ENCODE measurements at regions of chr5 and their contacts with region 1.

Region 1: GRCh38 chr5:151126199-151126645 is 31.4 kb downstream of the ANXA6 start:
- DNase-seq: peak; percentile 66
- ATAC-seq: peak; percentile 65
- H3K4me3 ChIP-seq: no peak overlapping the region
- H3K27ac ChIP-seq: peak overlapping the region; percentile 75
- H3K4me1 ChIP-seq: peaks cover 65% of the 10 kb centered on the region
- H3K27me3 ChIP-seq: no peaks in the 10 kb centered on the region
- CTCF ChIP-seq: peak; percentile 84 to 92 (median 87)
- EP300 ChIP-seq: no peak
- POLR2A ChIP-seq: peak; percentile 50; the same call in 1 of the 2 replicates
- RAD21 ChIP-seq: peak; percentile 93

Region 2: GRCh38 chr5:151030400-151030799 is 95.8 kb before region 1 on chr5:
- CTCF ChIA-PET with region 1: no interaction called
- POLR2A ChIA-PET with region 1: no interaction called
- RAD21 ChIA-PET with region 1: no interaction called
- SMC1A ChIA-PET with region 1: no interaction called
- in situ Hi-C with region 1: no loop called
- intact Hi-C with region 1: no loop called
- DNase-seq: no peak
- ATAC-seq: no peak
- H3K4me3 ChIP-seq: no peak overlapping the region
- H3K27ac ChIP-seq: no peak overlapping the region
- H3K4me1 ChIP-seq: no peaks in the 10 kb centered on the region
- H3K27me3 ChIP-seq: no peaks in the 10 kb centered on the region
- CTCF ChIP-seq: no peak
- EP300 ChIP-seq: no peak
- POLR2A ChIP-seq: no peak
- RAD21 ChIP-seq: no peak

Region 3: DNA sequence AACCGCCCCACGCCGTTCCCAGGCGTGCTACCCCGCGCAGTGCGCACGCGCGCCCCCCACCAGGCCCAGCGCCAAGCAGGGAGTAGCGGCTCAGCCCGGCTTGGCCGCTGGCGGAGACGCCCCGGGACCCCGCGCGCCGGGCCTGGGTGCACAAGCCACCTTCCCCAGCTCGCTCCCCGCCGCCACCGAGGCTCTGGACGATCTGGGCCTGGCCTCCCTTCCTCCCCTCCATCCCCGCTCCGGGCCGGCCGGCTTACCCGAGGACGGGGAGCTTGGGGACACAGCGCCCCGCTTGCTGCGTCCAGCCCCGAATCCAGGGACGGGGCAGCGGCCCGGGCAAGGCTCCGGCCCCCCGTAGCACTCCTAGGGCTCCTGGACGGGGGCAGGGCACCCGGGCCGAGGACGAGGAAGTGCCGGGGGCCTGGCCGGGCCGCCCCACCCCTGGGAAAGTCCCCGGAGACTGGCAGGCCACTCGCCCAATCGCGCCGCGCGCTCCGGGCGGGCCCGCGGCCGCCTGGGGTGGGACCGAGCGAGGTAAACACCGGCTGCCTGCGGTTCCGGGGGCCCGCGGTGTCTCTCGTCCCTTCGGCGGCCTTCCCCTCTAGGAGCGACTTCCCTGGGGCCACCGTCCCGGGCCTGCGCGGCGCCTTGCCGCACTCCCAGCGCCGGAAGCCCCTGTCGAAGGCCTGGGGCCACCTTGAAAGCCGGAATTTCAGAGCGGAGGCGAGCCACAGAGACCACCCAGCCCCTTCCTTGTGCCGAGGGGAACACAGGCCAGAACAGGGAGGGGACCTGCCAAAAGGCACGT is 45.4 kb before region 1 on chr5 and contains the start of gene TNIP1:
- CTCF ChIA-PET with region 1: interaction called, 17 read pairs
- POLR2A ChIA-PET with region 1: interaction called, 30 read pairs
- RAD21 ChIA-PET with region 1: interaction called, 11 read pairs
- SMC1A ChIA-PET with region 1: interaction called, 16 read pairs
- in situ Hi-C with region 1: no loop called
- intact Hi-C with region 1: no loop called
- DNase-seq: no peak
- ATAC-seq: peak; percentile 78
- H3K4me3 ChIP-seq: peak within 1 kb of the TSS; percentile 89
- H3K27ac ChIP-seq: peak within 1 kb of the TSS; percentile 90
- H3K4me1 ChIP-seq: peaks cover 44% of the 10 kb centered on the region
- H3K27me3 ChIP-seq: no peaks in the 10 kb centered on the region
- CTCF ChIP-seq: no peak
- EP300 ChIP-seq: no peak; a peak in 1 of 4 replicates
- POLR2A ChIP-seq: peak; percentile 89
- RAD21 ChIP-seq: no peak
- polyA plus RNA-seq, gene TNIP1: 4.4 to 13.7 TPM

Region 4: GRCh38 chr5:151141535-151141934 is 15.3 kb after region 1 on chr5:
- CTCF ChIA-PET with region 1: interaction called, 1,107 read pairs
- POLR2A ChIA-PET with region 1: interaction called, 153 read pairs
- RAD21 ChIA-PET with region 1: interaction called, 189 read pairs
- SMC1A ChIA-PET with region 1: interaction called, 1,132 read pairs
- in situ Hi-C with region 1: no loop called
- intact Hi-C with region 1: no loop called
- DNase-seq: no peak
- ATAC-seq: peak; percentile 90
- H3K4me3 ChIP-seq: peak overlapping the region; percentile 52
- H3K27ac ChIP-seq: peak overlapping the region; percentile 61
- H3K4me1 ChIP-seq: peaks cover 60% of the 10 kb centered on the region
- H3K27me3 ChIP-seq: no peaks in the 10 kb centered on the region
- CTCF ChIP-seq: no peak
- EP300 ChIP-seq: no peak
- POLR2A ChIP-seq: peak; percentile 67
- RAD21 ChIP-seq: 0 out of 2 replicates have a peak, but pooled peaks have one; percentile 13

Region 5: GRCh38 chr5:151213800-151214613 is 87.8 kb after region 1 on chr5:
- CTCF ChIA-PET with region 1: interaction called, 38 read pairs
- POLR2A ChIA-PET with region 1: interaction called, 12 read pairs
- RAD21 ChIA-PET with region 1: interaction called, 59 read pairs
- SMC1A ChIA-PET with region 1: interaction called, 60 read pairs
- in situ Hi-C with region 1: no loop called
- intact Hi-C with region 1: loop called (anchors 1 kb)
- DNase-seq: peak; percentile 93
- ATAC-seq: peak; percentile 83
- H3K4me3 ChIP-seq: peak overlapping the region; percentile 74
- H3K27ac ChIP-seq: peak overlapping the region; percentile 99
- H3K4me1 ChIP-seq: peaks cover 57% of the 10 kb centered on the region
- H3K27me3 ChIP-seq: no peaks in the 10 kb centered on the region
- CTCF ChIP-seq: no peak
- EP300 ChIP-seq: peak in 1 of 2 experiments; percentile 64; a peak in 1 of 4 replicates
- POLR2A ChIP-seq: peak; percentile 93
- RAD21 ChIP-seq: no peak

Region 6: GRCh38 chr5:151252762-151253604 is 126.8 kb after region 1 on chr5 and contains the start of gene GM2A:
- CTCF ChIA-PET with region 1: interaction called, 7 read pairs
- POLR2A ChIA-PET with region 1: interaction called, 3 read pairs
- RAD21 ChIA-PET with region 1: interaction called, 17 read pairs
- SMC1A ChIA-PET with region 1: interaction called, 9 read pairs
- in situ Hi-C with region 1: no loop called
- intact Hi-C with region 1: no loop called
- DNase-seq: peak; percentile 98
- ATAC-seq: peak; percentile 81
- H3K4me3 ChIP-seq: peak within 1 kb of the TSS; percentile 98
- H3K27ac ChIP-seq: peak within 1 kb of the TSS; percentile 69
- H3K4me1 ChIP-seq: peaks cover 25% of the 10 kb centered on the region
- H3K27me3 ChIP-seq: no peaks in the 10 kb centered on the region
- CTCF ChIP-seq: no peak
- EP300 ChIP-seq: no peak
- POLR2A ChIP-seq: peak; percentile 94
- RAD21 ChIP-seq: no peak
- polyA plus RNA-seq, gene GM2A: 33.6 to 44.4 TPM

Region 7: GRCh38 chr5:151363673-151364072 is 237.5 kb after region 1 on chr5:
- CTCF ChIA-PET with region 1: no interaction called
- POLR2A ChIA-PET with region 1: no interaction called
- RAD21 ChIA-PET with region 1: no interaction called
- SMC1A ChIA-PET with region 1: no interaction called
- in situ Hi-C with region 1: no loop called
- intact Hi-C with region 1: no loop called
- DNase-seq: no peak
- ATAC-seq: no peak
- H3K4me3 ChIP-seq: no peak overlapping the region
- H3K27ac ChIP-seq: no peak overlapping the region
- H3K4me1 ChIP-seq: no peaks in the 10 kb centered on the region
- H3K27me3 ChIP-seq: no peaks in the 10 kb centered on the region
- CTCF ChIP-seq: no peak
- EP300 ChIP-seq: no peak
- POLR2A ChIP-seq: no peak
- RAD21 ChIP-seq: no peak

Measured in GM12878 (cell line).